Dorsolateral prefrontal cortex (tissue), 120 donors: ENCODE measurements at regions of chr11 and their contacts with region 1.

Region 1: GRCh38 chr11:64269380-64270234 is 14.9 kb downstream of the BAD start:
- DNase-seq: peak; percentile 97 to 99 (median 99)
- H3K4me3 ChIP-seq: peak overlapping the region; percentile 61 to 99 (median 84)
- H3K27ac ChIP-seq: peak overlapping the region; percentile 83 to 99 (median 98)
- H3K27me3 ChIP-seq: no peaks in the 10 kb centered on the region
- CTCF ChIP-seq: peak in 38 of 56 donors; percentile 6 to 61 (median 35)

Region 2: DNA sequence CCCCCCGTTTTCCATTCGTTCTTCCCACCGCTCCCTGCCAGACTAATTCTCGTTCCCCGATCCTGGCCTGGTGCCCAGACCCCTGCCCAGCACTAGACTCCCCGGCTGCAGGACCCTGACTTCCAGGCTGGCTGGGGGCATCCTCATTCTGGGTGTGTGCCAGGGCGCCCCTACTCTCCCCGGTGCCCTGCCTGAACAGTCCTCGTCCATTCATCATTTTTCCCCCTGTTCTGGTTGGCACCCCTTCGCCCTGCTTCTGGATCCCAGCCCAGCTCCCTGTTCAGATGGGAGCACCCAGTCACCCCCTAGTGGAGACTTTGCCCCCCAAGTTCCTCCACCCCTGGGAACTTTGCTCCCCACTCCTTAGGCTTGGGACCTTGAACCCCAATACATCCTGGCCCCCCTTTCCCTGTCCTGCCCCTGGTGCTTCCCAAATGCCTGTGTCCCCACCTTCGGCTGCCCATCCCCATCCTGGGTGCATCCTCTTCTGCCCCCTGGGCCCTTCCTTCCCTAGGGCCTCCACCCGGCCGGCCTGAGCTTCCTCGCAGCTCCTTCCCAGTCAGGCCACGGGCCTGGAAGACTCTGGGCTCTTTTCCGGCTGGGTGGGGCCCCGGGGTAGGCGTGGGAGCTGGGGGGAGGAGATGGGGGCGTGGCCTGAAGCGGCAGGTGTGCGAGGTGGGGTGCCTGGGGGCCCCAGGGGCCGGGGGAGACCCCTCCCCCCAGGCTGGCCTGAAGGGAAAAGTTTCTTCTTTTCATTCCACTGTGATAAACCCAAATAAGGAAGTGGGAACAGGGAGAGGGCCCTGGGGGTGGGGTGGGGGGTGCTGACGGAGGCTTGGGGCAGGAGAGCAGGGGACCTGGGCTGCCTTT is 17.4 kb before region 1 on chr11:
- intact Hi-C with region 1: loop called (anchors 2 kb)
- DNase-seq: no peak
- H3K4me3 ChIP-seq: peak overlapping the region; percentile 51 to 85 (median 72)
- H3K27ac ChIP-seq: peak overlapping the region in 21 of 59 donors; percentile 1 to 79 (median 34)
- H3K27me3 ChIP-seq: no peaks in the 10 kb centered on the region
- CTCF ChIP-seq: peak in 21 of 56 donors; percentile 9 to 34 (median 22)

Region 3: DNA sequence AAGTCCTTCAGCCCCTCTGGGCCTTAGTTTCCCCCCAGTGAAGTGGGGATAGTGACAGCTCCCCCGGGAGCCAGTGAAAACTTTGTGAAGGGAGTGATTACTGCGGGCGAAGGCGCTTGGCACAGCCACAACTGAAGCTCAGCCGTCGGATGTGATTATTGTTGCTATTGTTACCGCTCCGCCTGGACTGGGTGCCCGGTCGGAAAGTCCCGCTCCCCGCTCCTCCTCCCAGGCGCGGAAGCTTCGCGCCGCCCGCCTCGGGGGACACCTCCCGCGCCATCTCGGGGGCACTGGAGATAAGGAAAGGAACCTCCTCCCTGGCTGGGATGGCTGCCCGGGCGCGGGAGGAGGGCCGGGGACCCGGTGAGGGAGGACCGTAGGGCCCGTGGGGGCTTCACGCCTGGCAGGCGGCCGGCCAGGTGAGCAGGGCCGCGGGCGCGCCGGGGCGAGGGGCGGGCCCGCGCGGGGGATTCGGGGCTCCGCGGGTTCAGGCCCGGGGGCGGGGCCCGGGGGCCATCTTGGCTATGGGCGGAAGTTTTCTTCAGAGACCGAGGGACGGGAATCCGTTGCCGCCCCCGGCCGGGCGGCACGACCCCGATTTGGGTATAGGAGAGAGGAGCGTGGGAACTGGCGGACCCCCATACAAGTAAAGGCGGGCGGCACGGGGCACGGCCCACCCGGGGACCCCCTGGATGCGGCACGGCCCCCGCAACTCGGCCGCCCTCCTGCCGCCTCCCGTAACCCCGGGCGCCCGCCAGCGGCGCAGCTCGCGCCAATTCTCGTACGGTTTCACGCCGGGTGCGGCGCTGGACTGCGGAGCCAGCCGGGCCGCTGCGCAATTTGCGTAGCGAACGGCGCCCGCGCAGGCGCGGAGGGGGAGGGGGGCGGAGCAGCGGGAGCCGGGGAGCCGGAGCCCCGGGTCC is 15.6 kb after region 1 on chr11 and contains the start of gene GPR137:
- intact Hi-C with region 1: loop called (anchors 1 kb)
- DNase-seq: peak; percentile 75 to 94 (median 86)
- H3K4me3 ChIP-seq: peak within 1 kb of the TSS; percentile 61 to 100 (median 91)
- H3K27ac ChIP-seq: peak within 1 kb of the TSS; percentile 78 to 99 (median 96)
- H3K27me3 ChIP-seq: no peaks in the 10 kb centered on the region
- CTCF ChIP-seq: peak in 18 of 56 donors; percentile 7 to 41 (median 26)
- total RNA-seq, gene GPR137: 60.7 to 140 (median 86.2) TPM